H1 (cell line): ENCODE measurements at regions of chr16 and their contacts with region 1.

Region 1: GRCh38 chr16:72149676-72150464 is 22.1 kb downstream of the PMFBP1 start:
- DNase-seq: no peak
- H3K4me3 ChIP-seq: no peak overlapping the region
- H3K27ac ChIP-seq: no peak overlapping the region
- H3K4me1 ChIP-seq: no peaks in the 10 kb centered on the region
- H3K27me3 ChIP-seq: no peaks in the 10 kb centered on the region
- CTCF ChIP-seq: peak; percentile 16 to 52 (median 42)
- EP300 ChIP-seq: no peak
- POLR2A ChIP-seq: no peak
- RAD21 ChIP-seq: peak; percentile 47 to 68

Region 2: GRCh38 chr16:72131036-72131435 is 18.8 kb before region 1 on chr16:
- CTCF ChIA-PET with region 1: interaction called, 43 read pairs
- POLR2A ChIA-PET with region 1: interaction called, 8 read pairs
- DNase-seq: no peak
- H3K4me3 ChIP-seq: no peak overlapping the region
- H3K27ac ChIP-seq: no peak overlapping the region
- H3K4me1 ChIP-seq: peaks cover 0 to 3% (median 0%) of the 10 kb centered on the region in 4 experiments; a peak in 2 of 7 replicates
- H3K27me3 ChIP-seq: no peaks in the 10 kb centered on the region
- CTCF ChIP-seq: no peak
- EP300 ChIP-seq: no peak
- POLR2A ChIP-seq: no peak
- RAD21 ChIP-seq: no peak

Region 3: GRCh38 chr16:72137380-72138063 is 12.3 kb before region 1 on chr16:
- CTCF ChIA-PET with region 1: interaction called, 15 read pairs
- POLR2A ChIA-PET with region 1: interaction called, 8 read pairs
- DNase-seq: no peak
- H3K4me3 ChIP-seq: no peak overlapping the region
- H3K27ac ChIP-seq: no peak overlapping the region
- H3K4me1 ChIP-seq: 0 out of 7 replicates have a peak, but pooled peaks cover 0 to 2% (median 0%) of the 10 kb centered on the region in 4 experiments
- H3K27me3 ChIP-seq: no peaks in the 10 kb centered on the region
- CTCF ChIP-seq: no peak
- EP300 ChIP-seq: no peak
- POLR2A ChIP-seq: no peak
- RAD21 ChIP-seq: no peak